ENCODE measurements at regions of chrX and their contacts with region 1.

Region 1: GRCh38 chrX:136711147-136711546 is 63.2 kb downstream of the CD40LG start:
- DNase-seq: no peak
- H3K4me3 ChIP-seq: no peak overlapping the region
- H3K4me3 Mint-ChIP-seq: peak overlapping the region in 3 of 8 donors; percentile 1 to 69 (median 3)
- H3K27ac ChIP-seq: peak overlapping the region; percentile 56
- H3K27ac Mint-ChIP-seq: peak overlapping the region; percentile 81 to 98 (median 92)
- H3K4me1 ChIP-seq: peaks cover 56% of the 10 kb centered on the region
- H3K4me1 Mint-ChIP-seq: peaks cover 26 to 51% (median 36%) of the 10 kb centered on the region in 4 donors
- H3K27me3 ChIP-seq: no peaks in the 10 kb centered on the region
- H3K27me3 Mint-ChIP-seq: no peaks in the 10 kb centered on the region

Region 2: DNA sequence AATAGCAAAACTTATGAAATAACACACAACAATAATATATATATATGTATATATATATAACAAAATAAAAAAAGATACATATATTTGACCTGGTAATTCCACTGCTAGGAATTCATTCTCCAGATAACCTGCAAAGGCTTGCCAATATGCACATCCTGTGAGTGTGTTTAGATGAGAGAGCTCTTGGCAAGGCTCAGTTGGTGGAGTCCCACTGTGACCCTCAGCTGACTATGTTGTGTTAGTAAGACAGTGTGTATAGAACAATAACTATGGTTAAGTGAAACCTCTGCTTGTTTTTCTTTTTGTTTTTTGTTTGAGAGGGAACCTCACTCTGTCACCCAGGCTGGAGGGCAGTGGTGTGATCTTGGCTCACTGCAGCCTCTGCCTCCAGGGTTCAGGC is 208.9 kb after region 1 on chrX:
- CTCF ChIA-PET with region 1: interaction called, 13 read pairs
- POLR2A ChIA-PET with region 1: no interaction called
- intact Hi-C with region 1: loop called (anchors 1 kb)
- DNase-seq: no peak
- H3K4me3 ChIP-seq: no peak overlapping the region
- H3K4me3 Mint-ChIP-seq: no peak overlapping the region
- H3K27ac ChIP-seq: no peak overlapping the region
- H3K27ac Mint-ChIP-seq: no peak overlapping the region
- H3K4me1 ChIP-seq: peaks cover 3% of the 10 kb centered on the region
- H3K4me1 Mint-ChIP-seq: peaks cover 1 to 3% (median 2%) of the 10 kb centered on the region in 4 donors
- H3K27me3 ChIP-seq: no peaks in the 10 kb centered on the region
- H3K27me3 Mint-ChIP-seq: no peaks in the 10 kb centered on the region